ENCODE measurements at regions of chr3 and their contacts with region 1.

Region 1: DNA sequence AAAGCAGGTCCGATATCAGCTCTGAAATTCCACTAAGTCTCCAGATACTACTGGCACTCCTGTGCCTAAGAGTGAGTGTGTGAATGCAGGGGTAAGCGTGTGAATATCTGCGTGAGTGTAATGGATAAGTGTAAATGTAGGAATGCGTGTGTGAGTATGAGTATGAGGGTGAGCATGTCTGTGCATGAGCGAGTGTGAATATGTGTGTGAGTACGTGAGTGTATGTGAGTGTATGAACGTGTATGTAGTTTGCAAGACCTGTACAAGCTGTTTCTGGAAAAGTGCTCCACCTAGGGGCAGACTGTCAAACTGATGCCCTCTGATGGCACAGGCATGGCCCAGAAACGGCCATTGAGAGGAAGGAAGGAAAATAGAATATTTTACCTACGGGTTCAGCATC is 24.4 kb upstream of the FRMD4B start:
- DNase-seq: peak; percentile 67 to 77 (median 75)
- ATAC-seq: peak; percentile 83 to 90 (median 88)
- H3K4me3 ChIP-seq: peak overlapping the region in 7 of 12 donors; percentile 17 to 42 (median 24)
- H3K27ac ChIP-seq: peak overlapping the region in 8 of 12 donors; percentile 12 to 90 (median 34)
- H3K4me1 ChIP-seq: peaks cover 0 to 38% (median 19%) of the 10 kb centered on the region in 12 donors
- H3K27me3 ChIP-seq: no peaks in the 10 kb centered on the region
- CTCF ChIP-seq: peak; percentile 72 to 90 (median 84)
- POLR2A ChIP-seq: no peak

Region 2: DNA sequence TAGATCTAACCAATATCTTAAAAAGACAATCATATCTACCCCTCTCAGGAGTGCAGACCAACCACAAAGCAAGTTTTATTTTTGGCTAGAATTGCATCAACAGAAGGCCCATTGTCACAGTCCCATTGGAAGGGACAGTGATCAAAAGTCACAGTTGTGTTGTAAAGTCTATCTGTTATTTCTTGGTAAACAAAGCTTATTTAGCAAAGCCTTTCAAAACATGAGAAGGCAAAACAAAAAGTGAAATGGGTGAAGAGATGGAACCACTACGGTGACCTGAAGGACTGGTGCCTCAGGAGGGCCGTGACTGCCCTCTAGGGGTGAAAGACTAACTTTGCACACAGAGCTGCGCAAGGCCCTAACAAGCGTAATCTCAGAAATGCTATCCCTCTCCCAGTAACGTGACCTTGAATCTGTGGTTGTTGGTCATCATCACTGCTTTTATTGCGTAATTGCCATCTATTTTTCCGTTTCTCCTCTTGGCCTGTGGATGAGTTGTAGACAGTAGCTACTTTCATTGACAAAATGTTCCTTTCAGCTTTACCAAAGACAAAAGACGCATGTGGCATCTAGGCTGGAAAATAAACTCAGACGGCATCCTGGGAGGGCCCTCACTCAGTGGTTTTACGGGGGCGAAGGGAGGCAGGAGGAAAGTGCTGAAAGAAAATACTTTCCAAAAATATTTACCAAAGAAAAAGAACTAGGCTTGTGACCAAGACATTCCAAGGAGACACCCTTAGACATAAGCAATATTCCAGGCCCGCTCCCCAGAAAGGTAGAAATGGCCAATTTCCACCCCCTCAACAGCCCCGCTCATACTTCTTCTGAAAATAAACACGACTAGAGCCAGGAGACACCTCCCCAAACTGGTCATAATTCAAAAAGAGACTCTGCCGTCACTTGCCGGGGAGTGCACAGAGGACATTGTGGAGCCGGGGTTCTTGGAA is 103.7 kb before region 1 on chr3:
- intact Hi-C with region 1: loop called in 6 of 10 experiments (anchors 5 kb)
- DNase-seq: peak; percentile 66 to 82 (median 78)
- ATAC-seq: peak; percentile 80 to 98 (median 94)
- H3K4me3 ChIP-seq: no peak overlapping the region
- H3K27ac ChIP-seq: peak overlapping the region in 10 of 12 donors; percentile 26 to 83 (median 70)
- H3K4me1 ChIP-seq: peaks cover 0 to 21% (median 7%) of the 10 kb centered on the region in 12 donors
- H3K27me3 ChIP-seq: no peaks in the 10 kb centered on the region
- CTCF ChIP-seq: peak; percentile 88 to 99 (median 94)
- POLR2A ChIP-seq: no peak

Region 3: DNA sequence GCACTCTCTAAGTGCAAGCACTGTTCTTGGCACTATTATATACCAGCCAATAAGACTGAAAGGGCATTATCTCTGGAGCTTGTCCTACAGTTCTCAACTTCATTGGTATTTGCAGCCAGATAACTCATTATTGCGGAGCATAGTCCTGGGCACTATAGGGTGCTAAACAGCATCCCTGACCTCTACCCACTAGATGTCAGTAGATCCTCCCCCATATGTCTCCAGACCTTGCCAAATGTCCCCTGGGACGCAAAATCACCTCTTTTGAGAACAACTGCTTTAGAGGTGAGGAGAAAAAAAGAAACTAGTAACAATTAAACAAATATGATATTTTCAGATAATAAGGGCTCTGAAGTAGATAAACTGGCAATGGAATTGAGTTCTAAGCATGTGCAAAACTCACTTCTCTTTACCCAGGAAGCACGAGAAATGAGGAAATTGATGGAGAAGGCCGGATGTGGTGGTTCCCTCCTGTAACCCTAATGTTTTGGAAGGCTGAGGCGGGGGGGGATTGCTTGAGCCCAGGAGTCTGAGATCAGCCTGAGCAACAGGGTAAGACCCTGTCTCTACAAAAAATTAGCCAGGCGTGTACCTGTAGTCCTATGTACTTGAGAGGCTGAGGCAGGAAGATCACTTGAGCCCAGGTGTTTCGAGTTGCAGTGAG is 85.8 kb before region 1 on chr3:
- intact Hi-C with region 1: loop called in 8 of 10 experiments (anchors 2 to 5 kb)
- DNase-seq: peak in 1 of 5 donors; percentile 40
- ATAC-seq: peak in 3 of 4 donors; percentile 23 to 60 (median 32)
- H3K4me3 ChIP-seq: no peak overlapping the region
- H3K27ac ChIP-seq: peak overlapping the region in 3 of 12 donors; percentile 23 to 90 (median 83)
- H3K4me1 ChIP-seq: peaks cover 0 to 97% (median 42%) of the 10 kb centered on the region in 12 donors
- H3K27me3 ChIP-seq: no peaks in the 10 kb centered on the region
- CTCF ChIP-seq: peak in 11 of 12 donors; percentile 29 to 64 (median 51)
- POLR2A ChIP-seq: no peak

Measured in heart left ventricle (tissue), 16 donors.